ENCODE measurements at regions of chr16 and their contacts with region 1.

Region 1: DNA sequence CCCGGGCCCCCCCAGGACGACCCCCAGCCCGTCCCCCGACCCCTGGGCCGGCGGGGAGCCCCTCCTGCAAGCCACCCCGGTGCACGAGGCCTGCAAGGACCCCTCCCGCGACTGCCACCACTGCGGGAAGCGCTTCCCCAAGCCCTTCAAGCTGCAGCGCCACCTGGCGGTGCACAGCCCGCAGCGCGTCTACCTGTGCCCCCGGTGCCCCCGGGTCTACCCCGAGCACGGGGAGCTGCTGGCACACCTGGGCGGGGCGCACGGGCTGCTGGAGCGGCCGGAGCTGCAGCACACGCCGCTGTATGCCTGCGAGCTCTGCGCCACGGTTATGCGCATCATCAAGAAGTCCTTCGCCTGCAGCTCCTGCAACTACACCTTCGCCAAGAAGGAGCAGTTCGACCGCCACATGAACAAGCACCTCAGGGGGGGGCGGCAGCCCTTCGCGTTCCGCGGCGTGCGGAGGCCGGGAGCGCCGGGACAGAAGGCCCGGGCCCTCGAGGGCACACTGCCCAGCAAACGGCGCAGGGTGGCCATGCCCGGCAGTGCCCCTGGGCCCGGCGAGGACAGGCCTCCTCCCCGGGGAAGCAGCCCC is 15.6 kb upstream of the ZFPM1 start:
- DNase-seq: no peak

Region 2: GRCh38 chr16:87891764-87892163 is 545.7 kb before region 1 on chr16:
- intact Hi-C with region 1: no loop called
- DNase-seq: no peak

Region 3: GRCh38 chr16:88194397-88195268 is 242.8 kb before region 1 on chr16:
- intact Hi-C with region 1: loop called in 1 of 2 experiments (anchors 10 kb)
- DNase-seq: no peak

Region 4: GRCh38 chr16:88487920-88488851 is 50.7 kb after region 1 on chr16:
- intact Hi-C with region 1: no loop called
- DNase-seq: no peak

Region 5: GRCh38 chr16:88505405-88506082 is 68.1 kb after region 1 on chr16:
- intact Hi-C with region 1: no loop called
- DNase-seq: no peak

Region 6: GRCh38 chr16:88527186-88527936 is 89.9 kb after region 1 on chr16:
- intact Hi-C with region 1: loop called (anchors 5 kb)
- DNase-seq: no peak

Region 7: DNA sequence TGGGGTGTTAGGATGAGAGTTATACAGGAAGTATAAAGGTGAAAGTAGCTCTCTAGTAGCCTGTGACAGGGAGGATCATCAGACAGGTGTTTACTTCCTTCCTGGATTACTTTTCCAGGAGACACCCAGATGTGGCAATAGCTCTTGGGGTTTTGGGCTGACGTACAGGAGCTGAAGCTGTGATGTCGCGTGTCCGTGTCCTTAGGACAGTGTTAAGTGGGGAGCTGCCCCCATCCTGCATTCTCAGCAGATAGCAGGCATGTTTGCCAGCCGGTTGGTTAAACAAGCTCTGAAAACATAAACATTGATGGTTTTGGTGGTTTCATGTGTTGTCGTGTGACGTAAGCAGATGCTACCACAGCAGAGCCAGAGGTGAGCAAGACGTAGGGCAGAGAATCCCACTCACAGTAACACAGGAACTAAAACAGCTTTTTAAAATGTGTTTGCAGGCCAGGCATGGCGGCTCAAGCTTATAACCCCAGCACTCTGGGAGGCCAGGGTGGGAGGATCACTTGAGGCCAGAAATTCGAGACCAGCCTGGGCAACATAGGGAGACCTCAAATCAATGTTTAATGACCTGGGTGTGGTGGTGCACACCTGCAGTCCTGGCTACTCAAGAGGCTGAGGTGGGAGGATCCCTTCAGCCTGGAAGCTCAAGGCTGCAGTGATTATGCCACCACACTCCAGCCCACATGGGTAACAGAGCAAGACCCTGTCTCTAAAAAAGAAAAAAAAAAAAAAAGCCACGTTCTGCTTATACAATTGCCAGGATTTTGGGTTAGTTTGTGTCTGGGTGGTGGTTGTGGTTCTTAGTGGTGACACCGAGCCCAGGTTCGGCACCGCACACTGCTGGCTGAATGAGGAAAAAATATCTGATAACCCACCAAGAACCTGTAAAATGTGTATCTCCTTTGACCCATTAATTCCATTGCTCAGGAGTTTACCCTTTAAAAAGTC is 182.7 kb after region 1 on chr16:
- intact Hi-C with region 1: no loop called
- DNase-seq: no peak

Region 8: GRCh38 chr16:89297156-89297883 is 859.9 kb after region 1 on chr16:
- intact Hi-C with region 1: loop called in 1 of 2 experiments (anchors 5 kb)
- DNase-seq: no peak